ENCODE measurements at regions of chr1 and their contacts with region 1.

Region 1: DNA sequence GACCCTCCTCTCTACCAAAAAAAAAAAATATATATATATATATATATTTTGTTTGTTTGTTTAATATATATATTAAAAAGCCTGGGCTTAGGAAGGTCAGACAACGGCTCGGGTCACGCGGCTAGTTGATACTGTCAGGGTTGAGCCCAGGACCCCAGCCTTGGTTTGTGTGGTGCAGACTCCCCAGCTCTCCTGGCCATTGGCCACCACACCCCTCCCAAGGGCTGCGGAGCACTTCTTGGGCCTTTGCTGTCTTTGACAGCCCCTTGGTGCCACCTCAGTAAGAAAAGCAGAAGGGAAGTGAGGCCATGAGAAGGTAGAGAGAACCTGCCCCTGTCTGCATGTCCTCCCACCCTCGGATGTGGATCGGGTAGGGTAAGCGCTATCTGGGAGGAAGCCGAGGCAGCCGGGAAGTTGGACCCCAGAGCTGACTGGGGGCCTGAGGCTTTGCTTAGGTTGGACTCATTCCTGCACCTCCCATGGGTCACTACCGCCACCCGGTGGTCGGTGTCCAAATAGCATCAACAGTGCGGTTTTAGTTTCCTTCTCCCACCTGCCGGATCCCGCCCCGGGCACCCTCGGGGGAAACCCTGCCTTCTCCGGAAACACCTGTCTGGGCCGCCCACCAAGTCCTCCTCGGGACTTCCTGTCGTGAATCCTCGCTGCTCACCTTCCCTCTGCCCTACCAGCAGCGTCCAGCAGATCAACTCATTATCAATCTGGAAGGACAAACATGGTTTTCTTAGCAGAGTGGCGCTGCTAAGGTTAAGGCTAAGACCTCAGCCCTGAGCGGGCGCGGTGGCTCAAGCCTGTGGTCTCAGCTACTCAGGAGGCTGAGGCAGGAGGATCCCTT is 29.8 kb upstream of the GNPAT start:
- DNase-seq: peak; percentile 76
- H3K4me3 ChIP-seq: peak overlapping the region; percentile 6 to 52 (median 37)
- H3K27ac ChIP-seq: no peak overlapping the region
- H3K4me1 ChIP-seq: peaks cover 2% of the 10 kb centered on the region
- H3K27me3 ChIP-seq: peaks cover 0 to 5% of the 10 kb centered on the region in 2 experiments
- CTCF ChIP-seq: peak; percentile 84 to 90
- POLR2A ChIP-seq: no peak

Region 2: GRCh38 chr1:230632273-230632873 is 578.9 kb before region 1 on chr1:
- CTCF ChIA-PET with region 1: no interaction called
- POLR2A ChIA-PET with region 1: no interaction called
- dilution Hi-C with region 1: no loop called
- intact Hi-C with region 1: loop called (anchors 1 kb)
- DNase-seq: peak; percentile 15
- H3K4me3 ChIP-seq: no peak overlapping the region
- H3K27ac ChIP-seq: no peak overlapping the region
- H3K4me1 ChIP-seq: no peaks in the 10 kb centered on the region
- H3K27me3 ChIP-seq: peaks cover 0 to 6% of the 10 kb centered on the region in 2 experiments
- CTCF ChIP-seq: peak; percentile 41 to 56
- POLR2A ChIP-seq: no peak

Region 3: DNA sequence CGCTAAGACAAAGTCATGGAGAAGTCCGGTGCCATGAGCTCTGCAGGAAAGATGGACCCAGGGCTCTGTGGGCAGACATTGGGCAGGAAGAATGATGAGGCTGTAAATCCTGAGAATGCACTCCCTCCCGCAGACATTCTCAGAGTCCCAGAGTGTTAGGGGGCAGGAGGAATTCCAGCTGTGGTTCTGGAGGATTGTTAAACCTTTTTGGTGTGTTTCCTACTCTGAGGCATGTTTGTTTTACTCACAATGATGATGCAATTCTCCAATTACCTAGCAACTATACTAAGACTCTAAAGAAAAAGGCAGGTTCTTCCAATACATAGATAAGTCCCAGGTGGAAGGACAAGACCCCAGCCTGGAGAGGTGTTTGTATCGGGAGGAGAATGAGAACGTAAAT is 466.8 kb before region 1 on chr1:
- CTCF ChIA-PET with region 1: interaction called, 11 read pairs
- POLR2A ChIA-PET with region 1: no interaction called
- dilution Hi-C with region 1: no loop called
- intact Hi-C with region 1: no loop called
- DNase-seq: no peak
- H3K4me3 ChIP-seq: no peak overlapping the region
- H3K27ac ChIP-seq: no peak overlapping the region
- H3K4me1 ChIP-seq: no peaks in the 10 kb centered on the region
- H3K27me3 ChIP-seq: no peaks in the 10 kb centered on the region
- CTCF ChIP-seq: no peak
- POLR2A ChIP-seq: no peak

Region 4: DNA sequence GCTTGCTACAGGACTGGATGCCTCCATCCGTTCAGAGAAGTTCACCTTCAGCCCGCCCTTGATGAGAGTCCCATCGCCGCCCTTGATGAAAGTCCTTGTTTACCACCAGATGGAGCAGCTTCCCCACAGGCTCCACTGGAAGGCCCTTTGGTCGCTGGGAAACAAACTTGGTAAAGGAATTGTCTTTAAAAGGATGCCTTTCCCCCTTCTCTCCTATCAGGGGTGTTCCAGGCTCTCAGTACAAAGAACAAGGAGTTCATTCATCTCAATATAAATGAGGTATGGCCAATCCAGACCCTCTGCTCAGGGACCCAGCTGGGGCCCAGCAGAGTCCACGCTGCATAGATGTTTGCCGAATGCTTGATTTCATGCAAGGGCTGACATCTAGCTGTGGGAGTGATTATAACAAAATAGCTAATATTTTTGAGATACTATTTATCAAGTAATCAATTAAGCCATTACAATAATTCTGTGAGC is 413.3 kb before region 1 on chr1:
- CTCF ChIA-PET with region 1: interaction called, 40 read pairs
- POLR2A ChIA-PET with region 1: no interaction called
- dilution Hi-C with region 1: no loop called
- intact Hi-C with region 1: loop called (anchors 1 kb)
- DNase-seq: peak; percentile 50
- H3K4me3 ChIP-seq: no peak overlapping the region
- H3K27ac ChIP-seq: no peak overlapping the region
- H3K4me1 ChIP-seq: no peaks in the 10 kb centered on the region
- H3K27me3 ChIP-seq: no peaks in the 10 kb centered on the region
- CTCF ChIP-seq: peak; percentile 39 to 65
- POLR2A ChIP-seq: no peak

Region 5: GRCh38 chr1:230867903-230868735 is 343.1 kb before region 1 on chr1 and contains the start of gene C1orf198:
- CTCF ChIA-PET with region 1: no interaction called
- POLR2A ChIA-PET with region 1: no interaction called
- dilution Hi-C with region 1: no loop called
- intact Hi-C with region 1: loop called (anchors 2 kb)
- DNase-seq: peak; percentile 60
- H3K4me3 ChIP-seq: peak within 1 kb of the TSS; percentile 70 to 93 (median 83)
- H3K27ac ChIP-seq: peak within 1 kb of the TSS; percentile 33
- H3K4me1 ChIP-seq: peaks cover 20% of the 10 kb centered on the region
- H3K27me3 ChIP-seq: no peaks in the 10 kb centered on the region
- CTCF ChIP-seq: no peak
- POLR2A ChIP-seq: peak; percentile 65
- total RNA-seq, gene C1orf198: 27.7 and 29.2 TPM in 2 replicates

Region 6: DNA sequence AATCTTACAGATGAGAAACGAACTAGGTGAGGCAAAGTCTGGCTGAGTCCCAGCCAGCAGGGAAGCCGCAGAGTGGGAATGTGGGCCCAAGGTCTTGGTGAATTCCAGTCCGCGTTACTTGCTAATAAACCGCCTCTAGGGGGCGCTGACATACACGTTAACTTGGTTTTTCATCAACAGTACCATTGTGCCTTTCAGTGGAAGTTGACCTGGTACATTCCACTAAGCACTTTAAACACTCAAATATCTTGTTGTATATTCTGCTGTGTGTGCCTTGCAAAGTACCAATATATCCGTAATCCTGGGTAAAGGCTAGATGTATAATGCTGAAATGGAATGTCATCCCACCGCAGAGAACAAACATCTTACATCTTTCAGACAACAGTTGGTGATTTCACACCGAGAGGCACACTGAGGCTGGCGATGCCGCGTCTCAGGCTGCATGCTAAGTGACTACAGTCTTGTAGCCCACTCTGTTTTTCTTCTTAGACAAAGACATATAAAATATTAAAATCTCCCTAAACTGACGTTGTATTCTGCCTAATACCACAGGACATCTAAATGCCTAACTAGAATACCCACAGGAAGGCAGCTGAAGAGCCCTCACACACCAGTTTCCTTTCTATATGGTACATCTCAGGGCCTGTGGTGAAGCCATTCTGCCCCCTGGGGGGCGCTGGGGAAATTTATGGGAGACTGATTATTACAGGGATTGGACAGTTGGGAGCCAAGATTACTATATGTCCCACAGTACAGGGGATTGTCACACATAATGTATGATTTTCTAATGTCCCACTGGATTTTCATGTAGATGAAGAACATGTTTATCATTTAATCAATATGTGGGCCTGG is 293.7 kb before region 1 on chr1:
- CTCF ChIA-PET with region 1: interaction called, 9 read pairs
- POLR2A ChIA-PET with region 1: no interaction called
- dilution Hi-C with region 1: no loop called
- intact Hi-C with region 1: loop called (anchors 1 kb)
- DNase-seq: peak; percentile 72
- H3K4me3 ChIP-seq: no peak overlapping the region
- H3K27ac ChIP-seq: no peak overlapping the region
- H3K4me1 ChIP-seq: no peaks in the 10 kb centered on the region
- H3K27me3 ChIP-seq: no peaks in the 10 kb centered on the region
- CTCF ChIP-seq: peak; percentile 73 to 77
- POLR2A ChIP-seq: no peak

Region 7: GRCh38 chr1:231020139-231020601 is 191.1 kb before region 1 on chr1:
- CTCF ChIA-PET with region 1: interaction called, 6 read pairs
- POLR2A ChIA-PET with region 1: no interaction called
- dilution Hi-C with region 1: no loop called
- intact Hi-C with region 1: loop called (anchors 2 kb)
- DNase-seq: no peak
- H3K4me3 ChIP-seq: no peak overlapping the region
- H3K27ac ChIP-seq: no peak overlapping the region
- H3K4me1 ChIP-seq: peaks cover 7% of the 10 kb centered on the region
- H3K27me3 ChIP-seq: no peaks in the 10 kb centered on the region
- CTCF ChIP-seq: no peak
- POLR2A ChIP-seq: no peak

Region 8: DNA sequence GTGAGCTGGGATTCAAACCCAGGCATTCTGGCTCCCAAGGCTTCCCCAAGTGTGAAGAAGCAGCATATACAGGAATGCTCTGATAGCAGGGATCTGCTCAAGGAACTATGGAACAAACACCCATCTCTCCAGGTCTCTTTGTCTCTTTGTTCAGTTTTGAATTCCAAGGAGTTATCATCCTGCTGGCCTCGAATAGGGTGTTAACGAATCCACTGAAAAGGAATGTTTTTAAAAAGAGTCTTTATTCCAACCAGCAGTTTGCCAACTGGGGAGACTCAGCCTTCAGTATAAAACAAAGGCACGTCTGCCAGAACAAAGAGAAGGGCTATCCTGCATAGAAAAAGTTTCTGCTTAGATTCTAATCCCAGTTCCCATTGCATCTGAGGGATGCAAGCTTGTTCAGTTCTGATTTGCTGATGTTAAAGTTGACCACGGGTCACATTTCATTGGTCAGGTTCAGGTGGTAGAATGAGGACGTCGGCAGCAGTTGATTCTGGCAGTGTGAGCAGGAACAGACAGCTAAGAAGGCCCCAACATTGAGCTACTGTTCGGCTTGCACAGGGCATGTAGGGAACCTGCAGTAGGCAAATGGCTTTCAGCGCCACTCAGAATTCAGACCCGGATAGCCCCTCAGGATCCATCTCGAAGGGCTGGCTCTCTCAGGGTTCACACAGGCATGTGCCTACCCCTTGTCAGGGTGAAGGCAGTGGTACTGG is 27.2 kb before region 1 on chr1:
- CTCF ChIA-PET with region 1: no interaction called
- POLR2A ChIA-PET with region 1: no interaction called
- dilution Hi-C with region 1: no loop called
- intact Hi-C with region 1: no loop called
- DNase-seq: no peak
- H3K4me3 ChIP-seq: no peak overlapping the region
- H3K27ac ChIP-seq: no peak overlapping the region
- H3K4me1 ChIP-seq: no peaks in the 10 kb centered on the region
- H3K27me3 ChIP-seq: peaks cover 0 to 5% of the 10 kb centered on the region in 2 experiments
- CTCF ChIP-seq: no peak
- POLR2A ChIP-seq: no peak

Measured in endothelial cell of umbilical vein (primary cell).